ENCODE measurements at regions of chr1 and their contacts with region 1.

Region 1: DNA sequence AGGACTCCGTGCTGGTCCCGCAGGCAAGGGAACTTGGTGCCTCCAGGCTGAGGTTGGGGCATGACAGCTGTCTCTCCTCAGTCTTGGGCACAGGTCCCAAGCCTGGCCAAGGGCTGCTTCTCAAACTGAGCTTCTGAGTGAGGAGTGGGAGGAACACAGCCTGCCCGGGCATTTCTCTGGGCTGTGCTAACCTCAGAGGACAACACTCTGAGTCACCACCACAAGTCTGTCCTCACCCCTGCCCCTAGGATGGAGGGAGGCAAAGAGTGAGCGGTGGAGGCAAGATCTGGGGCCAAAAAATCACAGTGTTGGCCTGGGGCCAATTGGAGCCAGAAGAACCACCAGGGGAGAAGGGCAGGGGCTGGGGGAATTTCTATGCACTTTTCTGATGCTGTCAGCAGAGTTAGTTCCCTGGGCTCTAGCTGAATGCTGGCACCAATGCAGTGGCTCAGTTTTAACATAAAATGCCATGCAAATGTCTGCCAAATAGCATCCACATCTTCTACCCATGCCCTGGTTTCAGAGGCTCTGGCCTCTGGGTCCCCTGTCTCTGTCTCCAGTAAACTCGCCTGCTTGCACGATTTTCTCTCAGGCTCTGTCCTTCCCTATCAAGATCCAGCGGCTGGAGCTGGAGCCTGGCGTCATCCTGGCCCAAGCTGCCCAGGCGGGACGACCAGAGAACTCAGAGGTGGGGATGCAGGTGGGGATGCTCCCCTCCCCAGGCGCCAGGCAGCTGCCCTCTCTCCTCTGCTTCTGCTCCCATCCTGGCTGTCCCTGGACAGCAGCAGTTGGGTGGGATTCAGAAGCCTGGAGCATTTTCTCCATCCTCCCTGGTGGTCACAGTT is 11.0 kb upstream of the CDK18 start:
- DNase-seq: peak; percentile 57
- H3K4me3 ChIP-seq: no peak overlapping the region
- H3K27ac ChIP-seq: 0 out of 4 replicates have a peak overlapping the region, but pooled peaks of 1 of the 2 experiments have one; percentile 3
- H3K4me1 ChIP-seq: peaks cover 20 to 21% of the 10 kb centered on the region in 2 experiments; a peak in 3 of 4 replicates
- H3K27me3 ChIP-seq: peaks cover 5% of the 10 kb centered on the region; the same call in 1 of the 2 replicates
- CTCF ChIP-seq: no peak
- EP300 ChIP-seq: peak in 1 of 2 experiments; percentile 37; a peak in 1 of 4 replicates
- RAD21 ChIP-seq: no peak

Region 2: GRCh38 chr1:205137901-205138300 is 355.6 kb before region 1 on chr1:
- CTCF ChIA-PET with region 1: no interaction called
- POLR2A ChIA-PET with region 1: no interaction called
- DNase-seq: no peak
- H3K4me3 ChIP-seq: no peak overlapping the region
- H3K27ac ChIP-seq: no peak overlapping the region
- H3K4me1 ChIP-seq: peaks cover 0 to 3% of the 10 kb centered on the region in 2 experiments; a peak in 1 of 4 replicates
- H3K27me3 ChIP-seq: no peaks in the 10 kb centered on the region
- CTCF ChIP-seq: no peak
- EP300 ChIP-seq: no peak
- RAD21 ChIP-seq: no peak

Region 3: DNA sequence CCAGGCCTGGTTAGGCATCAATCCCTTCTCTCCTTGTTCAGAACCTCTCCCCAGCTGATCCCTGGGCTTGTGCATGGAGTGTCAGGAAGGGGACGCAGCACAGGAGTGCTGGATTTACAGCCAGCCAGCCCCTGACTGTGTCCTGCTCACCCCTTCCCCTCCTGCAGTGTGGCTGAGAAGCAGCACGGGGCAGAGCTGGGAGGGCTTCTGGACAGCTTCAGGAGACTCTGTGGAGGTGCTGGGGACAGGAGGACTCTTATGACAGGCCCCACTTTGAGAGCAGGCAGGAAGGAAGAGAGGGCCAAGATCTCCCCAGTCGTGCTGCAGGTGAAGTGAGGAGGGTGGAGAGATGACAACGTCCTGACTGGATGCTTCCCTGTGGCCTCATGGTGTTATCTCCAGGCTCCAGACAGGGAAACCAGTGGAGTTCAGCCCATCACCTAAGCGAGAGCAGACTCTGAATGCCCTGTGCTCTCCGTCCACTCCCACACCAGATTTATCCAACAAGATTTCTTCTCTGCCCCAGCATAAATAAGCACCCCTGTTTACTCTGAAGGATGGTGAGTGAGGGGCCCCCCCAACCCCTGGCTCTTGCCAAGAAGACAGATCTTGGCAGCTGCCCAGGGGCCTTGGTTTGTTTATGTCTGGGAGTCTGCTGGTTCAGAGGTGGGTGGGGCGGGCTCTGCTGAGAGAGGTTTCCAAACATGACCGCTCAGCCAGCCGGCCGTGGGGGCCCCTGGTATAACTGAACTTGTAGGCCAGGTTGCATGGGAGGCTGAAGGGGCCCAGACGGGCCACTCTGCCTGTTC is 244.5 kb before region 1 on chr1:
- CTCF ChIA-PET with region 1: no interaction called
- POLR2A ChIA-PET with region 1: no interaction called
- DNase-seq: peak; percentile 58
- H3K4me3 ChIP-seq: no peak overlapping the region
- H3K27ac ChIP-seq: peak overlapping the region in 1 of 2 experiments; percentile 40; a peak in 1 of 4 replicates
- H3K4me1 ChIP-seq: peaks cover 7 to 20% of the 10 kb centered on the region in 2 experiments; a peak in 1 of 4 replicates
- H3K27me3 ChIP-seq: no peaks in the 10 kb centered on the region
- CTCF ChIP-seq: no peak
- EP300 ChIP-seq: no peak
- RAD21 ChIP-seq: no peak

Region 4: DNA sequence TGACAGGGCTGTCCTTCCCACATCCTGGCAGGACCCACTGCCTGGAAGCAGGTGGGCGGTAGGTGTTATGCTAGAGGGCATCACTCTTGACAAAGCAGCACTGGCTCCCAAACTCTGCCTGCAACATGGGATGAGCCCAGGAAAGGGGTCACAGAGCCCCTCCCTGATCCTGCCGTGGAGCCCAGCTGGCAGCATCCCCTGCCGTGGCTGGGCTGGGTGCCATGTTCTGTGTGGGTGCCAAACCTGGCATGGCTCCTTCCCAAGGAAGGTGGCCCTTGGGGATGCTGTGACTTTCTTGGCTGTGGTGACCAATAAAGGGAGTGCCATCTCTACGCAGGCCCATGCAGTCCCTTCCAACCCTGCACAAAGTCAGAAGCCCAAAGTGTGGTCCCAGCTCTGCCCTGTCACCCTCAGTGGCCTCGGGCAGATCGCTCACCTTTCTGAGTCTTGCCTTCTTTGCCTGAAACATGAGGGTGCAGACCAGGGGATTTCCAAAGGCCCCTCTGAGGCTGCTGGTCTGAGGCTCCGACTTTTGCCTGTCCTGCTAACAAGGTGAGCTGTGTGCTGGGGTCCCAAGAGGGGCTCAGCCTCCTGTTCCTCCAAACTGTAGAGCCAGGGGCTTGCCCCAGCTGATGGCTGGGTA is 17.0 kb after region 1 on chr1:
- CTCF ChIA-PET with region 1: interaction called, 1,333 read pairs
- POLR2A ChIA-PET with region 1: no interaction called
- DNase-seq: no peak
- H3K4me3 ChIP-seq: no peak overlapping the region
- H3K27ac ChIP-seq: no peak overlapping the region
- H3K4me1 ChIP-seq: peaks cover 0 to 48% of the 10 kb centered on the region in 2 experiments; a peak in 2 of 4 replicates
- H3K27me3 ChIP-seq: no peaks in the 10 kb centered on the region
- CTCF ChIP-seq: no peak
- EP300 ChIP-seq: no peak
- RAD21 ChIP-seq: no peak

Measured in SK-N-SH (cell line).